WTC11 (cell line): ENCODE measurements at regions of chr5 and their contacts with region 1.

Region 1: GRCh38 chr5:17132444-17133083 is 84.9 kb upstream of the BASP1 start:
- DNase-seq: no peak
- ATAC-seq: peak; percentile 65
- H3K4me3 Mint-ChIP-seq: no peak overlapping the region
- H3K27ac Mint-ChIP-seq: no peak overlapping the region
- H3K4me1 Mint-ChIP-seq: peaks cover 9% of the 10 kb centered on the region
- H3K27me3 Mint-ChIP-seq: peaks cover under 1% of the 10 kb centered on the region
- CTCF ChIP-seq: peak; percentile 65

Region 2: DNA sequence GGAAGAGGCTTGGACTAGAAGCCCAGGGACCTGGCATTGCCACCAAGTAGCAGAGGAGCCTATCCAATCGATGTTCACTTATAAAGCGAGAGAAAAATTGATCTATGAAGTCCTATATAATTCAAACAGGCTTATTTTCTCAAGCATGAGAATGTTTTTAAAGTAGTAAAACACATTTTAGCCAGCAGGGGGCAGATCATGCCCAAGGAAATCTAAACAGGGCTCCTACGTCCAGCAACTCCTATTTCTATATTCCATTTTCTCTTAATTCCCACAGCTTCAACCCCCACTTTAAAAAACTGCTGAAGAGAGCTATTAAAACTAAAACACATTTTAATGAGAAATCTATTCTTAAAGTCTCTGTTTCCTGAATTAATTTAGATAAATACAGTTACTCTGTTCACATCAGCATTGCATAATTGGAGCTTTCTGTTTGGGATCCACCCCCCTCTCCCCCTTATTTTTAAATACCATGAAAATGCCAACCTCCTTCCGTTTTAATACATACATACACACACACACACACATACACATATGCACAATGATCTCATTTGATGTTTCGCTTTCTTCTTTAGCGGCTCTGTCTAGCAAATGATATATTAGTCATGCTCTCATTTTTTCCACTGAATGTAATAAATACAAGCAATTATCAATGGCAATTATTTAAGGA is 341.4 kb before region 1 on chr5:
- CTCF ChIA-PET with region 1: interaction called, 13 read pairs
- POLR2A ChIA-PET with region 1: no interaction called
- DNase-seq: no peak
- ATAC-seq: no peak
- H3K4me3 Mint-ChIP-seq: no peak overlapping the region
- H3K27ac Mint-ChIP-seq: no peak overlapping the region
- H3K4me1 Mint-ChIP-seq: peaks cover 6% of the 10 kb centered on the region
- H3K27me3 Mint-ChIP-seq: no peaks in the 10 kb centered on the region; the same call in 1 of the 2 replicates
- CTCF ChIP-seq: peak; percentile 72

Region 3: GRCh38 chr5:17113163-17113958 is 19.2 kb before region 1 on chr5:
- CTCF ChIA-PET with region 1: interaction called, 14 read pairs
- POLR2A ChIA-PET with region 1: no interaction called
- DNase-seq: no peak
- ATAC-seq: no peak
- H3K4me3 Mint-ChIP-seq: no peak overlapping the region
- H3K27ac Mint-ChIP-seq: no peak overlapping the region
- H3K4me1 Mint-ChIP-seq: peaks cover 39% of the 10 kb centered on the region
- H3K27me3 Mint-ChIP-seq: no peaks in the 10 kb centered on the region
- CTCF ChIP-seq: no peak

Region 4: GRCh38 chr5:17151686-17152085 is 19.1 kb after region 1 on chr5:
- CTCF ChIA-PET with region 1: interaction called, 21 read pairs
- POLR2A ChIA-PET with region 1: no interaction called
- DNase-seq: peak; percentile 47
- ATAC-seq: peak; percentile 86
- H3K4me3 Mint-ChIP-seq: no peak overlapping the region
- H3K27ac Mint-ChIP-seq: peak overlapping the region; percentile 42; the same call in 1 of the 2 replicates
- H3K4me1 Mint-ChIP-seq: peaks cover 24% of the 10 kb centered on the region
- H3K27me3 Mint-ChIP-seq: peaks cover 31% of the 10 kb centered on the region
- CTCF ChIP-seq: no peak

Region 5: GRCh38 chr5:17169507-17169906 is 36.9 kb after region 1 on chr5:
- CTCF ChIA-PET with region 1: interaction called, 11 read pairs
- POLR2A ChIA-PET with region 1: no interaction called
- DNase-seq: no peak
- ATAC-seq: no peak
- H3K4me3 Mint-ChIP-seq: no peak overlapping the region
- H3K27ac Mint-ChIP-seq: no peak overlapping the region
- H3K4me1 Mint-ChIP-seq: peaks cover 38% of the 10 kb centered on the region
- H3K27me3 Mint-ChIP-seq: no peaks in the 10 kb centered on the region
- CTCF ChIP-seq: no peak